ENCODE measurements at regions of chr5 and their contacts with region 1.

Region 1: DNA sequence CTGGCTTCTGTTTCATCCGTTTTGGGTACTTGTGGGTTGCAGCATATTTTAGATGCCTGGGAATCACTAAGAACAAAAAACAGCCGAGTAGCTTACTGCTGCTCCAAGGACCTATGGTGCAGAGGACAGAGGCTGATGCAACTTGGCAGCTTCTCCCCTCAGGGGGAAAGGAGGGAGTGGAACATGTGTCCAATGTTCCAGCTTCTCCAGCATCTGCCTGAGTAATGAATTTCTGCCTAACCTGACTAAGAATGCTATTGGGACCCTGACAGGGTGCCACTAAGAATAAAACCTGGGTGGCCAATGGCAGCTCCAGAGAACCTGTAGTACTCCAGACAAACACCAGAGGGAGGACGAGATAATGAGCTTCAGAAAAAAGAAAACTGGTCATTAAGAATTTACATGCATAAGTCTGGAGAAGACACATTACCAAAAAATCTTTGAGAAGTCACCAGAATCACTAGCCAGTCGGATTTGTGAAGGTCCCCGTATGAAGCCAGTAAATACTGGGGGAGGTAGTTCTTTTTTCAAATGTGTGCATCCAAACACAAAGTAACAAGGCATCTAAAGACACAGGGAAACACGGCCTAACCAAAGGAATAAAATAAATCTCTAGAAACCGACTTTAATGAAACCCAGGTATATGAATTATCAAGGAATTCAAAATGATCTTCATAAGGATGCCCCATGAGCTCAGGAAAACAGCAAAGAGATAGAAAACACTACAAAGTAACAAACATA is 293.5 kb downstream of the HINT1 start:
- DNase-seq: peak; percentile 21
- H3K4me3 ChIP-seq: no peak overlapping the region
- H3K27ac ChIP-seq: no peak overlapping the region
- H3K4me1 ChIP-seq: no peaks in the 10 kb centered on the region
- H3K27me3 ChIP-seq: no peaks in the 10 kb centered on the region
- CTCF ChIP-seq: peak; percentile 38 to 74 (median 67)
- EP300 ChIP-seq: no peak
- POLR2A ChIP-seq: no peak

Region 2: DNA sequence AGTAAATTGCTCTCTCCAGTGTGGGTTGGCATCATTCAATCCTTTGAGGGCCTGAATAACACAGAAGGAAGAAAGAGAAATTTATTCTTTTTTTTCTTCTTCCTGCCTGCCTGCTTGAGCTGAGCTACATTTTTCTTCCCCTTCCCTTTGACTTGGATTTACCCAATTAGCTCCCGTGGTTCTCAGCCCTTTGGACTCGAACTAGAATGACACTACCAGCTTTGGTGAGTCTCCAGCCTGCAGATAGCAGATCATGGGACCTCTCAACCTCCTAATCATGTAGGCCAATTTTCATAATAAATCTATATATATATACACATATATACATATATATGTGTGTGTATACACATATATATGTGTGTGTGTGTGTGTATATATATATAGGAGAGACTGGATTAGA is 1648.3 kb before region 1 on chr5:
- in situ Hi-C with region 1: no loop called
- intact Hi-C with region 1: no loop called
- DNase-seq: no peak
- H3K4me3 ChIP-seq: no peak overlapping the region
- H3K27ac ChIP-seq: no peak overlapping the region
- H3K4me1 ChIP-seq: no peaks in the 10 kb centered on the region
- H3K27me3 ChIP-seq: no peaks in the 10 kb centered on the region
- CTCF ChIP-seq: no peak
- EP300 ChIP-seq: no peak
- POLR2A ChIP-seq: no peak

Region 3: DNA sequence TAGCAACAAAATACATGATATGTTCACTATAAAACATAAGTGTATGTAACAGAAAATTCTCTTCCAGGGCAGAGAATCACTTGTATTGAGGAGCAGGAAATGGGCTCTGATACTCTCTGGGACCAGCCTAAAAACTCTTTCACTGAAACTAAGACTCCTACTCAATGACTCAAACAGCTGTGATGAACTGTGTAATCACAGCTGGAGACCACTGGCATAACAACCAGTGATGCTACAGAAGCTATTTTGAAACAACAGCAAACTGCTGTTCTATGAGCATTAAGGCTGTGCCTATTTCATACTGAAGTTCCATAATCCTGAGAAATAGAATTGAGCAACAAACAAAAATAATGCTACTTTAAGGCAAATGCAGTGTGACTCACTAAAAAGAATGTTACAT is 300.4 kb before region 1 on chr5:
- in situ Hi-C with region 1: no loop called
- intact Hi-C with region 1: no loop called
- DNase-seq: no peak
- H3K4me3 ChIP-seq: no peak overlapping the region
- H3K27ac ChIP-seq: no peak overlapping the region
- H3K4me1 ChIP-seq: no peaks in the 10 kb centered on the region
- H3K27me3 ChIP-seq: no peaks in the 10 kb centered on the region
- CTCF ChIP-seq: no peak
- EP300 ChIP-seq: no peak
- POLR2A ChIP-seq: no peak

Region 4: GRCh38 chr5:131417240-131417869 is 545.8 kb after region 1 on chr5:
- in situ Hi-C with region 1: loop called in 3 of 4 experiments (anchors 10 to 25 kb)
- intact Hi-C with region 1: no loop called
- DNase-seq: peak; percentile 87
- H3K4me3 ChIP-seq: no peak overlapping the region
- H3K27ac ChIP-seq: no peak overlapping the region
- H3K4me1 ChIP-seq: peaks cover 0 to 6% (median 0%) of the 10 kb centered on the region in 4 donors
- H3K27me3 ChIP-seq: no peaks in the 10 kb centered on the region
- CTCF ChIP-seq: peak; percentile 83 to 88 (median 86)
- EP300 ChIP-seq: no peak
- POLR2A ChIP-seq: no peak

Measured in transverse colon (tissue), 4 donors.